T-cell (primary cell): ENCODE measurements at regions of chr19 and their contacts with region 1.

Region 1: DNA sequence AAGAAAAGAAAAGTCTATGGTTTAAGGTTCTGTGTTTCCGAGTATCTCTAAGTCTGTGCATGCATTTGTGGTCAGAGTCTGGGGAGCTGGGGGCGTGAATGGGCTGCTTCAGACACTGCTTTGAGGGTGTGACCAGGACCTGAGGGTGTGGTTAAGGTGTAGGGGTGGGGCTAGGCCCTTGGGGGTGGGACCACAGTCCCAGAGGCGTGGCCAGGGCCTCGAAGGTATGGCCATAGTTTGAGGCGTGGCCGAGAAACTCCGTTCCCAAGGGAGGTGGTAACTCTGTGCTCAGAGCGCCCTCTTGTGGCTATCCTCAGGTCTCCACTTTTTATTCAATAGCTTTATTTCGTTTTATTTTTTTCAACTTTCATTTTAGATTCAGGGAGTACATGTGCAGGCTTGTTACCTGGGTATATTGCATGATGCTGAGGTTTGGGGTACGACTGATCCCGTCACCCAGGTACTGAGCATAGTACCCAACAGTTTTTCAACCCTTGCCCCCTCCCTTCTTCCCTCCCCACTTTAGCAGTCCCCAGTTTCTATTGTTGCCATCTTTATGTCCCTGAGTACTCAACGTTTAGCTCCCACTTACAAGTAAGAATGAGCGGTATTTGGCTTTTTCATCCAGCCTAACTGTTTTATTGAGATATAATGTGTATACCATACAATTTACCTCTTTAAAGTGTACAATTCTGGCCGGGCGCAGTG is 7.0 kb upstream of the CBLC start:
- DNase-seq: peak; percentile 93 to 100 (median 96)
- ATAC-seq: peak; percentile 99 to 100 (median 100)
- H3K4me3 ChIP-seq: no peak overlapping the region
- H3K4me3 Mint-ChIP-seq: peak overlapping the region; percentile 43 to 60 (median 60)
- H3K27ac ChIP-seq: peak overlapping the region; percentile 7
- H3K27ac Mint-ChIP-seq: peak overlapping the region; percentile 81 to 82
- H3K4me1 ChIP-seq: peaks cover 0 to 15% of the 10 kb centered on the region in 2 experiments
- H3K4me1 Mint-ChIP-seq: peaks cover 17 to 35% (median 33%) of the 10 kb centered on the region in 3 donors
- H3K27me3 ChIP-seq: no peaks in the 10 kb centered on the region
- H3K27me3 Mint-ChIP-seq: no peaks in the 10 kb centered on the region

Region 2: DNA sequence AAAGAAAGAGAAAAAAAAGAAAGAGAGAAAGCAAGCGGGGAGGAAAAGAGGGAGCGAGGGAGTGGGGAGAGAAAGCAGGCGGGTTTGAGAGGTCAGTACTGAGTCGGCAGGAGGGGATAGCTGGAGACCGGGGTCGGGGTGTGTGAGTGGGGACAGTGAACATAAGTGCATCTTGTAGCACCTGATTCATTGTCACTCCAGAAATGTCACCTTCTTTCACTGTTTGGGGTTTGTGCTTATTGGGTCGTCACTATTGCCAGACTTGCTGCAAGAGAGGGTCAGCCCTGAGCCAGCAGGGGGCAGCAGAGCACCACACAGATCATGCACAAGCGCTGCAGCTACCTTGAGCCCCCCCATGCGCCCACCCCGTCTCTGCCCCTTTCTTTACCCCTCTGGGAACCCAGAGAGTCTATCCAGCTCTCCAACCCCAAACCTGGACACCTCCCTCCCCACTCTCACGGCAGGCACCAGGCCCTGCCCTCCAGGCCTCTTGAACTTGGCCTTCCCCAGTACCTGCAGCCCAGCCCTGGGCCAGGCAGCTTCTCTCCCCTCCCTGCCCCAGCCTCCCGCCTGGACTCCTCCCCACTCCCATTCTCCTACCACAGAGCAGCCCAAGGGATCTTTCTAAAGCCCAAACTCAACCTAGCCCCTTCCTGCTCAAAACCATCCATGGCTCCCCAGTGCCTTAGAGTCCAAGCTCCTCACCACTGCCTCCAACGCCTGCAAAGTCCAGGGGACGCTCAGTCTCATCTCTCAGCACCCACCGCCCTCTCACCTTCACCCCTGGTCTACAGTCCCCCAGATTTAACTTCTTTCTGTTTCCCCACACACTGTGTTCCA is 81.4 kb before region 1 on chr19:
- CTCF ChIA-PET with region 1: interaction called, 7 to 13 read pairs
- POLR2A ChIA-PET with region 1: interaction called in 1 of 2 experiments, 7 read pairs
- DNase-seq: peak; percentile 45 to 87 (median 69)
- ATAC-seq: peak; percentile 35 to 65 (median 39)
- H3K4me3 ChIP-seq: no peak overlapping the region
- H3K4me3 Mint-ChIP-seq: no peak overlapping the region
- H3K27ac ChIP-seq: no peak overlapping the region
- H3K27ac Mint-ChIP-seq: peak overlapping the region in 1 of 2 donors; percentile 0
- H3K4me1 ChIP-seq: peaks cover 4 to 29% of the 10 kb centered on the region in 2 experiments
- H3K4me1 Mint-ChIP-seq: peaks cover 33 to 38% (median 37%) of the 10 kb centered on the region in 3 donors
- H3K27me3 ChIP-seq: peaks cover 0 to 17% of the 10 kb centered on the region in 2 experiments
- H3K27me3 Mint-ChIP-seq: peaks cover 10 to 16% of the 10 kb centered on the region in 2 donors

Region 3: DNA sequence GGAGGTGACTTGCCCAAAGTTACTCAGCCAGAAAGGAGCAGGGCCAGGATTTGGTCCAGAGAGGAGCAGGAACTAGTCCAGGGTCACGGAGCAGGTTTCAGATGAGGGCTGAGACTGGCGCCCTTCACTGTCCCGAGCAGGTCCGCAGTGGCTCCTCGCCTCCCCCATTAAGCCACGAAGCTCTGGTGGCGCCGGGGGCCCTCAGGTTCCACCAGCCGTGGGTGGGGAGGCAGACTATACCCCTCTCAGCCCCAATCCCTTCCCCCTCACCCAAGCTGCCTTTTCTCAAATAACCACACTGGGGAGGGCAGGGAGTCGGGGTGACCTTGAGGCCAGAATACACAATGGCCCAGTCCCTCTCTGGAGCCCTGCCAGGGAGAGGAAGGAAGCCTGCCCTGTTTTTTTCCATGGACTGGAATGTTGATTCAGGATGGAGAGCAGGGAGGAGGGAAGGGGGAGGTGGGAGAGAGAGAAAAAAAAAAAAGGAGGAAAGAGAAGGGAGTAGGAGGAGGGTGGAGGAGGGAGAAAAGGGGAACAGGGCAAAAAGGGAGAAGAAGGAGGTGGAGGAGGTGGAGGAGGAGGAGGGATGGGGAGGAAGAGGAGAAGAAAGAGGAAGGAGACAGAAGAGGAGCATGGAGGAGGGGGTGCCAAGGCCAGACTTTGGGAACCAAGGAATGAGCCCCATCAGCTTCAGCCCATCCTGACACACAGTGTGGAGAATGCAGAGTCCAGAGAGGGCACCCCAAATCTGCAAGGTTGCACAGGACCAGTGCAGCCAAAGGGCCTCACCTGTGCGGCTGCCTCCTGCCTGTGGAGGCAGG is 52.1 kb before region 1 on chr19:
- CTCF ChIA-PET with region 1: interaction called, 45 to 199 read pairs
- POLR2A ChIA-PET with region 1: interaction called in 1 of 2 experiments, 3 read pairs
- DNase-seq: no peak
- ATAC-seq: no peak
- H3K4me3 ChIP-seq: no peak overlapping the region
- H3K4me3 Mint-ChIP-seq: no peak overlapping the region
- H3K27ac ChIP-seq: no peak overlapping the region
- H3K27ac Mint-ChIP-seq: no peak overlapping the region
- H3K4me1 ChIP-seq: peaks cover 0 to 16% of the 10 kb centered on the region in 2 experiments
- H3K4me1 Mint-ChIP-seq: peaks cover 11 to 12% (median 12%) of the 10 kb centered on the region in 3 donors
- H3K27me3 ChIP-seq: peaks cover 0 to 20% of the 10 kb centered on the region in 2 experiments
- H3K27me3 Mint-ChIP-seq: no peaks in the 10 kb centered on the region

Region 4: DNA sequence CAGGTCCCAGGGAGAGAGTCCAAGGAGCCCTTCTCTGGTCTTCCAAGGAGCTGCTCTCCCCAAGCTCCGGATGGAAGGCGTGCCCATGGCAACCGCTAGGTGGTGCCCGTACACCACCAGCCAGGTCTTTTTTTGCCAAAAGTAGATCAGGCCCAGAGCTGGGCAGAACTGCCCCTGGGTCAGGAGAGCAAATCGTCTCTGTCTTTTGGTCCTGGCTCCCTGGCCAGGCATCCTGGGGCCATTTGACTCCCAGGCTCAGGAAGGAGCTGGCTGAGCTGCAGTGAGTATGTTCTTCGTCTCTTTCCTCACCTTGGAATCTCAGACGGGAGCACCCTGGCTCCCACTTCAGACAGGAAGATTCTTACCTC is 46.8 kb before region 1 on chr19:
- CTCF ChIA-PET with region 1: interaction called, 45 to 199 read pairs
- POLR2A ChIA-PET with region 1: interaction called in 1 of 2 experiments, 3 read pairs
- DNase-seq: peak; percentile 30 to 89 (median 70)
- ATAC-seq: peak; percentile 86 to 90 (median 88)
- H3K4me3 ChIP-seq: no peak overlapping the region
- H3K4me3 Mint-ChIP-seq: no peak overlapping the region
- H3K27ac ChIP-seq: no peak overlapping the region
- H3K27ac Mint-ChIP-seq: no peak overlapping the region
- H3K4me1 ChIP-seq: peaks cover 2 to 45% of the 10 kb centered on the region in 2 experiments
- H3K4me1 Mint-ChIP-seq: peaks cover 32 to 39% (median 33%) of the 10 kb centered on the region in 3 donors
- H3K27me3 ChIP-seq: peaks cover 0 to 36% of the 10 kb centered on the region in 2 experiments
- H3K27me3 Mint-ChIP-seq: no peaks in the 10 kb centered on the region

Region 5: DNA sequence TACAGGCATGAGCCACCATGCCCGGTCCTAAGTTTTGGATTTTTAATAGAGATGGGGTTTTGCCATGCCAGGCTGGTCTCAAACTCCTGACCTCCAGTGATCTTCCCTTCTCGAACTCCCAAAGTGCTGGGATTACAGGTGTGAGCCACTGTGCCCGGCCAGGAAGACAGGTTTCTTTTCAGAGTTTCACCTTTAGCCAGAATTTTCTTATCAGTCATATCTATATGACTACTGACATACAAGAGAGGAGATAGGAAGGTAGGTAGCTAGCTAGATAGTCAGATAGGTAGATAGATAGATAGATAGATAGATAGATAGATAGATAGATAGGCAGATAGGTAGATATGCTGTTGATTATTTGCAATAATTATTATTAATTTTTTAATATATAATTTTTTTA is 14.5 kb after region 1 on chr19:
- CTCF ChIA-PET with region 1: interaction called in 1 of 2 experiments, 10 read pairs
- POLR2A ChIA-PET with region 1: no interaction called
- DNase-seq: no peak
- ATAC-seq: no peak
- H3K4me3 ChIP-seq: no peak overlapping the region
- H3K4me3 Mint-ChIP-seq: no peak overlapping the region
- H3K27ac ChIP-seq: no peak overlapping the region
- H3K27ac Mint-ChIP-seq: no peak overlapping the region
- H3K4me1 ChIP-seq: peaks cover 0 to 7% of the 10 kb centered on the region in 2 experiments
- H3K4me1 Mint-ChIP-seq: peaks cover 4 to 8% (median 4%) of the 10 kb centered on the region in 3 donors
- H3K27me3 ChIP-seq: peaks cover 0 to 27% of the 10 kb centered on the region in 2 experiments
- H3K27me3 Mint-ChIP-seq: peaks cover 2 to 3% of the 10 kb centered on the region in 2 donors